ENCODE measurements at regions of chr12 and their contacts with region 1.

Region 1: DNA sequence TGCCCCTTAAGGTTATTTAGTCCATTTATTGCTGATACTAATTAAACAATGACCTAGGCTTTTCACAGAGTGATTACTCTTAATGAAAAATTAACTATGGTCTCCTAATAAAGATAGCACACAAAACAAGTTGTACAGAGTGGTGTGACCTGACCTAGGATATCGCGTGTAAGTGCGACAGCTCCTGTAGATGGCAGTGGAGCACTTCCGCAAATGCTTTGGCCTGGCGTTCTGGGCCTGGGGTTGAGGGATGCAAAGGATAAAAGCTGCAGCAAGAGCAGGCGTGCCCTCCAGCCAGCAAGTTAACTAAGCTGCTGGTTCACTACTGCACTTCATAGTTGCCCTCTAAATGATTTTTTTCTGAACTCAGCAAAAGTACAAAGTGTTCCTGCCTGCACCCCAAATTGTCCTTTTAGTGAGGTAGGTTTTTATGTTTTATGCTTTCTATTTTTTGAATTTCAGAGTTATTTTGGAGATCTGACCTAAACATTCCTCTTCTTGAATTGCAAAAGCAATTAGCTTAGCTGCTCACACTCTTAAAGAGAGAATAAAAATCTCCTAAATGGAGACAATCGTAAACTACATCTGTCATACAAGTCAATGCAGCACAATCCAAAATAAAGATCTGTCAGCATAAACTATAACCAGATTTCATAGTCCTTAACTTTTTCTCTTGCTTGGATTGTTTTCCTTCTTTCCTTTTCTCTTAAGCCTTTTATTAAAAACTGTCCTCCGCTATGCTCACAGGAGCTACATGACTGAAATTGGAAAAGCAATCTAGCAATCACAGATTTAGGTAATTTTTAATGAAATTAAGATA is 379.6 kb downstream of the LRIG3 start:
- DNase-seq: peak; percentile 91
- ATAC-seq: peak; percentile 92
- H3K4me3 ChIP-seq: no peak overlapping the region
- H3K27ac ChIP-seq: peak overlapping the region; percentile 16; the same call in 1 of the 2 replicates
- H3K4me1 ChIP-seq: peaks cover 7% of the 10 kb centered on the region
- H3K27me3 ChIP-seq: no peaks in the 10 kb centered on the region
- CTCF ChIP-seq: peak; percentile 93
- POLR2A ChIP-seq: no peak
- RAD21 ChIP-seq: peak; percentile 98

Region 2: GRCh38 chr12:58346032-58346632 is 194.6 kb before region 1 on chr12:
- CTCF ChIA-PET with region 1: interaction called, 7 read pairs
- POLR2A ChIA-PET with region 1: no interaction called
- dilution Hi-C with region 1: no loop called
- in situ Hi-C with region 1: no loop called
- intact Hi-C with region 1: loop called (anchors 1 kb)
- DNase-seq: peak; percentile 62
- ATAC-seq: peak; percentile 77
- H3K4me3 ChIP-seq: no peak overlapping the region
- H3K27ac ChIP-seq: no peak overlapping the region
- H3K4me1 ChIP-seq: peaks cover 10% of the 10 kb centered on the region
- H3K27me3 ChIP-seq: no peaks in the 10 kb centered on the region
- CTCF ChIP-seq: peak; percentile 86
- POLR2A ChIP-seq: no peak
- RAD21 ChIP-seq: peak; percentile 92

Region 3: DNA sequence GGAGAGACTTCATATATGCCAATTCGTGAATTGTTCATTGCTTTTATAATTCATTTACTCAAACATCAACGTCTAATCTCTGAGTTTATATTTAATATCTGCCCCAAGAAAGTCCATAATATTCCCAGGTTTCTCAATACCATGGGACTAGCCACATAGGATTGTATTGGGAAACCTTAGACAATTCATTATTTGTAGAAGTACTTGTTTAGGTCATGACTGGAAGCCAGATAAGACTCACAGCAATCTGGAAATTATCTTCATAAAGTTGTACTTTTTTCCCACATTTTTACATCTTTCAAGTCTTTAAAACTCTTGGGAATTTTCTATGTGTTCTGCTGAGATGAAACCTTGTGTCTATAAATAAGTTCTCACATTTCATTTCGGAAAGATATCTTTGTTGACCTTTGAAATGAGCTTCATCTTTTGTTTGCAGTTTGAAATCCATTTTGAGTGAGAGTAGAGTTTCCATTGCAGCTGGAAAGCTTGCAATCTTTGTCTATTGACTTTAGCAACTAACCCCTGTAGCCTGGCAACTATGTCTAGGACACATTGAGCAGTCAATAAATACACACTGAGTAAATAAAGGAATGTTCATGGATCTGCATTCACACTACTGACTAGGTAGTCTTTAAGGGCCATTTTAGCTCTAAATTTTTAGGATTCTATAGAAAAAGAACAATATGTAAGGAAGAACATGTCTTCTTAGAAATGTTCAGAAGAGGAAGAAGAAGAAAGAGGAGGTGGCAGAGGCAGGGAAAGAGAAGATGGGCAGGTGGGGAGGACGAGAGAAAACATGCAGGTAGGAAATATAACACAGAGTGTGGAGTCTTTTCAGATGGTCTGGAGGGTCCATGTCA is 225.2 kb after region 1 on chr12:
- CTCF ChIA-PET with region 1: interaction called, 3 read pairs
- POLR2A ChIA-PET with region 1: no interaction called
- dilution Hi-C with region 1: no loop called
- in situ Hi-C with region 1: no loop called
- intact Hi-C with region 1: loop called (anchors 10 kb)
- DNase-seq: peak; percentile 59
- ATAC-seq: peak; percentile 25
- H3K4me3 ChIP-seq: no peak overlapping the region
- H3K27ac ChIP-seq: peak overlapping the region; percentile 87; the same call in 1 of the 2 replicates
- H3K4me1 ChIP-seq: peaks cover 9% of the 10 kb centered on the region
- H3K27me3 ChIP-seq: no peaks in the 10 kb centered on the region
- CTCF ChIP-seq: no peak
- POLR2A ChIP-seq: no peak
- RAD21 ChIP-seq: no peak

Region 4: DNA sequence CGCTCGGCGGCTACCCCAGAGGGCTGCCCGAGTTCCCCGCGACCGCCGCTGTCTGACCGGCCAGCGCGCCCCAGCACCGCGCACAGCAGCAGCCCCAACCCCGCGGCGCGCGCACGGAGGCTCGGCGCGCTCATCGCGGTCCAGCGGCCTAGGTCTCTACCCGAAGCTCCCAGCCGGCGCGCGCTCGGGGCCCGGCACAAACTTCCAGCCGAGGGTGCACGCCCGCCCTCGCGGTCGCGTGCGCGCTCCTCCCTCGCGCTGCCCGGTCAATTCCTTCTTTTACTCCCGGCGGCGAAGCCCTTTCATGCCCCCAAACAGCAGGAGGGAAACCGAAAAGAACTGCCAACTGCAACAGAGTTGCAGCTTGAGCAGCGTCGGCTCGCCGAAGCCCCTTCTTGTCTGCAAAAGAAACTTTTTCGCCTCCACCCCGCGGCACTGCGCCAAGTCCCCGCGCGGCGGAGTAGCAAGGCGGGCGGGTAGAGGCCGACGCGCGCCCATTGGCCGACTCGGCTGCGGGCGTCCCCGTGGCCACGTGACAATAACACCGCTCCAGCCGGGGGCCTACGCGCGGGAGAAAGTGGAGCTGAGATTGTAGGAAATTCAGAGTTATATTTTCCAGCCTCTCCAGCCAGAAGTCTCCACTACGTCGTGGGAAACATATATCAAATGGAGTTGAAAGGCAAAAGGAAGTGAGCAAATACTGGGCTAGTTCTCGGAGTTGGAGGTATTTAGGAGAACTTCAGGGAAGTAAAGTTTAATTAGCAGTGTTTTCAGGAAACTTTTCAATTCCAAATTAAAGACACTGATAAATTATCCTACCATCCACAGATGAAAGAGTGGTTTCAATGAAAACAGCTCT is 379.6 kb after region 1 on chr12 and contains the start of gene LRIG3:
- CTCF ChIA-PET with region 1: interaction called, 12 read pairs
- POLR2A ChIA-PET with region 1: no interaction called
- dilution Hi-C with region 1: no loop called
- in situ Hi-C with region 1: no loop called
- intact Hi-C with region 1: loop called (anchors 1 kb)
- DNase-seq: peak; percentile 89
- ATAC-seq: peak; percentile 82
- H3K4me3 ChIP-seq: peak within 1 kb of the TSS; percentile 80
- H3K27ac ChIP-seq: peak within 1 kb of the TSS; percentile 98
- H3K4me1 ChIP-seq: no peaks in the 10 kb centered on the region; the same call in none of the 2 replicates
- H3K27me3 ChIP-seq: no peaks in the 10 kb centered on the region
- CTCF ChIP-seq: 0 out of 2 replicates have a peak, but pooled peaks have one; percentile 1
- POLR2A ChIP-seq: no peak
- RAD21 ChIP-seq: no peak
- total RNA-seq, gene LRIG3: 63.9 and 71.2 TPM in 2 replicates

Region 5: DNA sequence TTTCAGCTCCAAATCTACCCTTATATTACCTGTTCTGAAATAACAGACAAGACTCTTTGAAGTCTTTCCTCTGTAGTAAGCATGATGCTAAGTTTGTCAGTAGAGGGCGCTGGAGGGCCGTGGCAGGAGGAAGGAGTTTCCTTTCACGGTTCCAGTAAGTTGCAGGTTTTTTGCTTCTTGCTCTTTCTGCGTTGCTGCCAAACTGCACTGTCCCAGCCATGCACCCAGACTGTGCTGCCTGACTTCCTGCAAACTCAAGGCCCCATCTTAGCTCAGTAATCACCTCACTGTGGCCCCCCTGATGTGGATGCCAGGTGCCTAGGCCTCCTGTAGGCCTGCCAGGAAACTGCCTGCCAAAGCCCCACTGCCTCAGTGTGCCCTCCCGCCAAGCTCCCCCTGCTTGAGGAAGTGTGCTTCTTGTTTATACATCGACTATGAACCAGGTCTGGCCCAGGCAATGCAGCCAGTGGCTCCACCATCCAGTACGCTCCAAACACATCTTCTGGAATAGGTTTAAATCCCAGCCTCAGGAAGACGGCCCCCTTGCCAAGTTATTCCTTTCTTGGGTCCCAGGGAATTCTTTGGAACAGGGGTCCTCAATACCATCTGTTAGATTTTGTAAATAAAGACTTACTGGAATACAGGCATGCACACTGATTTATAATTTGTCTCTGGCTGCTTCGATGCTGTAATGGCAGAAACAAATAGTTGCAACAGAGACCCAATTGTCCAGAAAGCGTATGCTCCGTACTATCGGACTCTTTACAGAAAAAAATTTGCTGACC is 573.3 kb after region 1 on chr12:
- CTCF ChIA-PET with region 1: interaction called, 4 read pairs
- POLR2A ChIA-PET with region 1: no interaction called
- dilution Hi-C with region 1: no loop called
- in situ Hi-C with region 1: no loop called
- intact Hi-C with region 1: loop called (anchors 1 kb)
- DNase-seq: peak; percentile 81
- ATAC-seq: peak; percentile 90
- H3K4me3 ChIP-seq: no peak overlapping the region
- H3K27ac ChIP-seq: no peak overlapping the region
- H3K4me1 ChIP-seq: peaks cover 2% of the 10 kb centered on the region; the same call in 1 of the 2 replicates
- H3K27me3 ChIP-seq: no peaks in the 10 kb centered on the region
- CTCF ChIP-seq: peak; percentile 93
- POLR2A ChIP-seq: no peak
- RAD21 ChIP-seq: peak; percentile 90

Region 6: GRCh38 chr12:59372956-59373355 is 832.3 kb after region 1 on chr12:
- CTCF ChIA-PET with region 1: no interaction called
- POLR2A ChIA-PET with region 1: no interaction called
- dilution Hi-C with region 1: no loop called
- in situ Hi-C with region 1: no loop called
- intact Hi-C with region 1: loop called (anchors 10 kb)
- DNase-seq: peak; percentile 21
- ATAC-seq: peak; percentile 95
- H3K4me3 ChIP-seq: no peak overlapping the region
- H3K27ac ChIP-seq: no peak overlapping the region
- H3K4me1 ChIP-seq: no peaks in the 10 kb centered on the region
- H3K27me3 ChIP-seq: no peaks in the 10 kb centered on the region
- CTCF ChIP-seq: peak; percentile 46
- POLR2A ChIP-seq: no peak
- RAD21 ChIP-seq: peak; percentile 44

Measured in IMR-90 (cell line).